Mammary epithelial cell (primary cell): ENCODE measurements at regions of chr3 and their contacts with region 1.

Region 1: DNA sequence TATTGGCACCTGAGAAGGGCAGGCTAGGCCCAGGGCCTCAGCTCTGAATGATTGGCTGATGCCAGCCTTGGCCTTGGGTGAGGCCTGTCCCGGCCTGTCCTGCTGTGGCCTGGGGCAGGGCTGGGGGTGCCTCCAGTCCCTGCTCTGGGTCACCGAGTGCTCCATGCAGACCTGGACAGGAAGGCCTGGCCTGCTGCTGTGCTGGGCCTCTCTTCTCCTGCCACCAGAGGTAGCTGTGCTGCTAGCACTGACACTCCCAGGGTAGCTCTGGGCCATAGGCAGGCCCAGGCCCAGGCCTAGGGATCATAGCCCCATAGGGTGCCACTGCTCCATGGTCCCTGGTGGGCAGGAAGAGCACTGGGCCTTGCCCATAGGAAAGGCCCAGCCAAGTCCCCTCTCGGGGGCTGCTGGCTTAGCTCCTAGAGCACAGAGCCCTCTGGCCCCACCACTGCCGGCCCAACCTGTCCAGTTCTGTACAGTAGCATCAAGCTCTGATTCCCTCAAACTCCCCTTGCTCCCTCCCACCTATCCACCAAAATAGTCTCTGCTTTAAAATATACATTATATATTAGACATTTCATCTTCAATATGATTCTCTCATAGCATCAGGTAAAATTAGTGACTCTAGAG is 18.2 kb downstream of the ABTB1 start:
- DNase-seq: peak; percentile 66
- H3K4me3 ChIP-seq: no peak overlapping the region
- H3K27ac ChIP-seq: peak overlapping the region; percentile 42
- H3K4me1 ChIP-seq: peaks cover 24% of the 10 kb centered on the region
- H3K27me3 ChIP-seq: no peaks in the 10 kb centered on the region
- CTCF ChIP-seq: peak; percentile 76 to 91

Region 2: DNA sequence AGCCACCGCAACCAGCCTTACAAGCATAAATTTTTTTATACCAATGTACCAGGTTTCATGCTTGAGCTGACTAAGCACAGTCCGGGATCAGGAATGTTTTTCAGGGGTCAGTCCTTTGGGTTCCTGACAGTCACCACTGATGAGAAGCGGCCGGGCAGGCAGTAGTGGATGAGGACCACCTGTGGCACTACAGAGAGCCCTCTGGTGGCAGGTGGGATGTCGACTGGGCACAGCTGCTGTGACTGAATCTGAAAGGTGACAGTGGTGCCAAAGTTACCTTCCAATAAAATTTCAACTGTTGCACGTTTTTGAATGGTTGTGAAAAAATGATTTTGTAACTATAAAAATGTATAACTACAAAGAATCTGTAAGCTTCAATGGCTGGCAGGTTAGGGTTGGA is 134.4 kb before region 1 on chr3:
- CTCF ChIA-PET with region 1: no interaction called
- dilution Hi-C with region 1: no loop called
- in situ Hi-C with region 1: no loop called
- intact Hi-C with region 1: no loop called
- DNase-seq: no peak
- H3K4me3 ChIP-seq: no peak overlapping the region
- H3K27ac ChIP-seq: no peak overlapping the region
- H3K4me1 ChIP-seq: no peaks in the 10 kb centered on the region
- H3K27me3 ChIP-seq: no peaks in the 10 kb centered on the region
- CTCF ChIP-seq: no peak

Region 3: DNA sequence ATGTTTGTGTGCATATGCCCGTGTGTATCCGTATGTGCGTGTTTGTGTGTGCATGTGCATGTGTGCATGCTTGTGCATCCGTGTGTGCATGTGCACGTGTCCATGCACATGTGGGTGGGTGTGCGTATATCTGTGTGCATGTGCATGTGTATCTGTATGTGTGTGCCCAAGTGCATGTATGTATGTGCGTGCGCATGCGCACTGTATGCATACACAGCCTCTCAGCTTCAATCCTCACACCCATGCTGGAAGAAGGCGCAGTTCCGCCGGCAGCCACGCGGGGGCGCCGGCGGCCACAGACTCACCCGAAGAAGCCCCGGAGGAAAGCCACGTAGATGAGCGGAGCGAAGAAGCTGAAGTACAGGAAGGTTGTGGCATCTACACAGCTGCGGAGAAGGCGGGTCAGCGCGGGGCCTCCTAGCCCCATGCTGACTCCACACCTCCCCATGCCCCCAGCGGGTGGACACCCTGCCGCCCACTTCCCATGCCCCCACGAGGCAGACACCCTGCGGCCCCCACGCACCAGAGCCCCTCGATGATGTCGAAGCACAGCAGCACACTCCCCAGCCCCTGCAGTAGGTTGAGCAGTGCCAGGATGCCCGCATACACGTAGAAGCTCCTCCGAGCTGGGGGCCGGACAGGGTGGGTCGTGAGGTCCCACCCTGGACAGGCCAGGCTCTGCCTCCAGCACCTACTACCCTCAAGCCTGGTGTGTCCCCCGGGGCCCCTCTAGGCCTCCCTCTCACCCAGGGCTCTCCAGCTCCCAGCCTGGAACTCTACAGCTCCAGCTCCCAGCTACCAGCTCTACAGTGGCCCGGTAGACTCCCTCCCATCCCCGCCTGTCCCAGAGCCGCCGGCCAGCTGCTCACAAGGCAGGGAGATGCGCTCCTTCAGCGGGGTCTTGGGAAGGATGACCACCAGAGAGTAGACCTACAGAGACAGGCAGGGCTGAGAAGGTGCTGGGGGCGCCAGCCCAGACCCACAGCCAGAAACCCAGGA is 115.8 kb before region 1 on chr3:
- CTCF ChIA-PET with region 1: interaction called, 7 read pairs
- dilution Hi-C with region 1: no loop called
- in situ Hi-C with region 1: no loop called
- intact Hi-C with region 1: loop called (anchors 5 kb)
- DNase-seq: peak; percentile 82
- H3K4me3 ChIP-seq: no peak overlapping the region
- H3K27ac ChIP-seq: no peak overlapping the region
- H3K4me1 ChIP-seq: peaks cover 3% of the 10 kb centered on the region
- H3K27me3 ChIP-seq: no peaks in the 10 kb centered on the region
- CTCF ChIP-seq: peak; percentile 98 to 99

Region 4: DNA sequence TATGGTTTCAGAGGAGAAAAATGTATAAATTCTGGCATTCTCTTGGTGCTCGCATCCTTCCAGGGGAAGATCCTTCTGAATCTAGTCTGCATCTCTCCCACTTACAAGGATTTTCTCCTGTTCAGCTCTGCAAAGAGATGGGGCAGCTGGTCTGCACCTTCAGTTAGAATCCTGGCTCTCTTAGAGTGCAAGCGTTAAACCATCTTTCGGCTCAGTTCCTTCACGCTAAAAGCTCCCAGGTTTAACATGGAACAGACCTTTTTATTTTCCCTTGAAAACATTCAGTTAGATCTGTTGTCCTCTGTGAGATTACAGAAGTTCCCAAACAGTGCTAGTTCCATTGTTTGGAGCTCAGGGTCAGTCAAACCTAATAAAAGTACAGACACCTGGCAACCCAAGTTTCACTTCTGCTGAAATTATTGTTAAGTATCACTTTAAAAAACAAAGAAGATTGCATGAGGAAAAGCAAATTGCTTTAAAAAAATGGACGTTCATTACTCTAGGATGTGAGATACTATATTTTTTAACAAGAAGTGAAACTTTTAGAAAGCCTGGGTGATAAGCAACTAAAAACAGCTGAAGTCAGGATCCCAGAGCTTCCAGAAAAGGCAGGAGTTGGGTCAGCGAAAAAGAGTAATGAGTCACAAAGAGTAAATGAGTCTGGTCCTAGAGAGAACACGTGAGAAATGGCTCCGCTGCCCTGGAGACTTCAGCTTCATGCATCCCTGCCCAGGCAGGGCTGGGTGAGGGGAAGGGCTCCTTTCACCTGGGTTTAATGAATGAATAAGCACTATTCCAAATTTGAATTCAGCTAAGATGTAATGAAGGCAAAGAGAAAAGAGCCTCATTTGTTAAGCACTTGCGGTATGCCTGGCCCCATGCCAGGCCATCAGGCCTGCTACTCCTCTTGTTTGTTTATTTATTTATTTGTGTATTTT is 45.1 kb after region 1 on chr3:
- CTCF ChIA-PET with region 1: no interaction called
- dilution Hi-C with region 1: no loop called
- in situ Hi-C with region 1: no loop called
- intact Hi-C with region 1: loop called (anchors 2 kb)
- DNase-seq: peak; percentile 44
- H3K4me3 ChIP-seq: no peak overlapping the region
- H3K27ac ChIP-seq: peak overlapping the region; percentile 74
- H3K4me1 ChIP-seq: peaks cover 36% of the 10 kb centered on the region
- H3K27me3 ChIP-seq: no peaks in the 10 kb centered on the region
- CTCF ChIP-seq: no peak

Region 5: GRCh38 chr3:127768346-127769008 is 77.5 kb after region 1 on chr3:
- CTCF ChIA-PET with region 1: no interaction called
- dilution Hi-C with region 1: no loop called
- in situ Hi-C with region 1: no loop called
- intact Hi-C with region 1: loop called (anchors 5 kb)
- DNase-seq: peak; percentile 93
- H3K4me3 ChIP-seq: no peak overlapping the region
- H3K27ac ChIP-seq: peak overlapping the region; percentile 46
- H3K4me1 ChIP-seq: peaks cover 22% of the 10 kb centered on the region
- H3K27me3 ChIP-seq: no peaks in the 10 kb centered on the region
- CTCF ChIP-seq: no peak

Region 6: DNA sequence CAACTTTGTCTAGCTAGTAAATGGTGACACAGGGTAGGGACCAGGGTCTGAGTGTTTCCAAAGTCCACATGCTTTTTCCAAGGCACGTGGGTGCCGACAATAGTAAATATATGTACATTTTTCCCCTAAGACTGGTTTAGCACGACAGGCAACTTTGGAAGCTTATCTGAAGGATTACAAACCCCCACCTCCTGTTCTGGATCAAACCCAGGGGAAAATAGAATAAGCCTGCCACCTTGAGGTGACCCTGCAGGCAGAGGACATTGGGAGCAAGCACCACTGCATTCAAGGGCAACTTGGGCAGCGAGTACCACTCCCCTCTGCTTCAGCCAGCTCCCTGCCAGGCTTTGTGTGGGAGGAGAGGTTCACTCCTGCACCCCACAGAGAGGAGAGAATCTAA is 268.9 kb after region 1 on chr3:
- CTCF ChIA-PET with region 1: no interaction called
- dilution Hi-C with region 1: no loop called
- in situ Hi-C with region 1: loop called in 1 of 2 experiments (anchors 25 kb)
- intact Hi-C with region 1: loop called (anchors 2 kb)
- DNase-seq: no peak
- H3K4me3 ChIP-seq: no peak overlapping the region
- H3K27ac ChIP-seq: no peak overlapping the region
- H3K4me1 ChIP-seq: peaks cover 20% of the 10 kb centered on the region
- H3K27me3 ChIP-seq: no peaks in the 10 kb centered on the region
- CTCF ChIP-seq: peak; percentile 10 to 44